ENCODE measurements at regions of chr10 and their contacts with region 1.

Region 1: GRCh38 chr10:124719213-124719851 is 24.8 kb downstream of the FAM53B start:
- DNase-seq: peak; percentile 87
- ATAC-seq: peak; percentile 61
- H3K4me3 Mint-ChIP-seq: peak overlapping the region; percentile 60
- H3K27ac Mint-ChIP-seq: peak overlapping the region; percentile 91
- H3K4me1 Mint-ChIP-seq: peaks cover 92% of the 10 kb centered on the region
- H3K27me3 Mint-ChIP-seq: no peaks in the 10 kb centered on the region

Region 2: DNA sequence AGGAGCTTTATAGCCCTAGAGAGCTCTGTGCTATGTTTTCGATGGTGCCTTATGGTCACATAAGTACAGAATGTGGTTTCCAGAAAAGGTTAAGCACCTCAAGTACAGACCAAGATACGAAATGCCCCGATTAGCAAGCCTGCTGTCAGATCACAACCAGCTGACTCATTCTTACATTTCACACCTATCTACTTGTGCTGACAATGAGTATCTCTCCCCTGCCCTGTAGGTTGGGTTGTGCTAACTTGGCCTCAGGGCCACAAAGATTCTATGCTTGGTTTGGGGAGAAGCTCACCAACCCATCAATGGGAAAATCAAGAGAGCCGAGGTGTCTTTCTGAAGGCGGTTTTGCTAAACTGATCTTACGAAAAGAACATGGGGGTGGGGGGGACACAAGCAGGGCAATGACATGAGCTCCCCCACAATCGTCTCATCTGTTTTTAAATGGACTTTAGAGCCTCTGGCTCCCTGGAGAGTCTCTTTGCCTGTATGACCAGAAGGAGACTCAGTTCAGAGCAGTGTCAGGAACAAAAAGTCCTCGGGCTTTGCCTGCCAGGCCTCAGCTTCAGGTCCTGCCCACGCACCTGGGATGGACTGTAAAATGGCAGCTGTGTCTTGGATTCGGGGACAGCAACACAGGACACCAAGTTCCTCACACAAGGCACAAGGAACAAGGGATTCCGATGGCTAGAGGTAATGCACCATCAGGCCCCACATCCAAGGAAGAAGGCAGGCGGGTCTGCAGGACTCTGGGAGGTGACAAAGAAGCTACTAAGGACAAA is 30.3 kb before region 1 on chr10:
- CTCF ChIA-PET with region 1: interaction called, 106 read pairs
- DNase-seq: peak; percentile 92
- ATAC-seq: peak; percentile 95
- H3K4me3 Mint-ChIP-seq: peak overlapping the region; percentile 52
- H3K27ac Mint-ChIP-seq: peak overlapping the region; percentile 94
- H3K4me1 Mint-ChIP-seq: peaks cover 88% of the 10 kb centered on the region
- H3K27me3 Mint-ChIP-seq: no peaks in the 10 kb centered on the region

Region 3: GRCh38 chr10:124697830-124698544 is 21.3 kb before region 1 on chr10:
- CTCF ChIA-PET with region 1: interaction called, 106 read pairs
- DNase-seq: peak; percentile 71
- ATAC-seq: peak; percentile 31
- H3K4me3 Mint-ChIP-seq: no peak overlapping the region
- H3K27ac Mint-ChIP-seq: peak overlapping the region; percentile 98
- H3K4me1 Mint-ChIP-seq: peaks cover 98% of the 10 kb centered on the region
- H3K27me3 Mint-ChIP-seq: no peaks in the 10 kb centered on the region

Region 4: GRCh38 chr10:124732931-124733570 is 13.7 kb after region 1 on chr10:
- CTCF ChIA-PET with region 1: interaction called, 40 read pairs
- DNase-seq: peak; percentile 80
- ATAC-seq: peak; percentile 76
- H3K4me3 Mint-ChIP-seq: peak overlapping the region; percentile 67
- H3K27ac Mint-ChIP-seq: peak overlapping the region; percentile 89
- H3K4me1 Mint-ChIP-seq: peaks cover 97% of the 10 kb centered on the region
- H3K27me3 Mint-ChIP-seq: no peaks in the 10 kb centered on the region

Region 5: GRCh38 chr10:124748166-124748565 is 28.8 kb after region 1 on chr10:
- CTCF ChIA-PET with region 1: interaction called, 92 read pairs
- DNase-seq: no peak
- ATAC-seq: no peak
- H3K4me3 Mint-ChIP-seq: no peak overlapping the region
- H3K27ac Mint-ChIP-seq: peak overlapping the region; percentile 30
- H3K4me1 Mint-ChIP-seq: peaks cover 27% of the 10 kb centered on the region
- H3K27me3 Mint-ChIP-seq: no peaks in the 10 kb centered on the region

Region 6: GRCh38 chr10:124802313-124802675 is 83.0 kb after region 1 on chr10:
- CTCF ChIA-PET with region 1: no interaction called
- DNase-seq: no peak
- ATAC-seq: no peak
- H3K4me3 Mint-ChIP-seq: peak overlapping the region; percentile 78
- H3K27ac Mint-ChIP-seq: peak overlapping the region; percentile 82
- H3K4me1 Mint-ChIP-seq: peaks cover 19% of the 10 kb centered on the region
- H3K27me3 Mint-ChIP-seq: peaks cover 7% of the 10 kb centered on the region